Activated CD4-positive, alpha-beta memory T cell treated with anti-CD3 and anti-CD28 coated beads for 36 hours (primary cell): ENCODE measurements at regions of chr6 and their contacts with region 1.

Region 1: GRCh38 chr6:27672113-27672799 is 199.4 kb upstream of the ZNF184 start:
- DNase-seq: peak; percentile 60
- H3K4me3 Mint-ChIP-seq: peak overlapping the region; percentile 42
- H3K27ac Mint-ChIP-seq: no peak overlapping the region
- H3K4me1 Mint-ChIP-seq: peaks cover 30% of the 10 kb centered on the region
- H3K27me3 Mint-ChIP-seq: peaks cover 74% of the 10 kb centered on the region

Region 2: GRCh38 chr6:27237089-27237803 is 435.0 kb before region 1 on chr6:
- CTCF ChIA-PET with region 1: no interaction called
- POLR2A ChIA-PET with region 1: no interaction called
- intact Hi-C with region 1: loop called (anchors 5 kb)
- DNase-seq: peak; percentile 70
- H3K4me3 Mint-ChIP-seq: peak overlapping the region; percentile 44
- H3K27ac Mint-ChIP-seq: no peak overlapping the region
- H3K4me1 Mint-ChIP-seq: peaks cover 16% of the 10 kb centered on the region
- H3K27me3 Mint-ChIP-seq: peaks cover 61% of the 10 kb centered on the region

Region 3: DNA sequence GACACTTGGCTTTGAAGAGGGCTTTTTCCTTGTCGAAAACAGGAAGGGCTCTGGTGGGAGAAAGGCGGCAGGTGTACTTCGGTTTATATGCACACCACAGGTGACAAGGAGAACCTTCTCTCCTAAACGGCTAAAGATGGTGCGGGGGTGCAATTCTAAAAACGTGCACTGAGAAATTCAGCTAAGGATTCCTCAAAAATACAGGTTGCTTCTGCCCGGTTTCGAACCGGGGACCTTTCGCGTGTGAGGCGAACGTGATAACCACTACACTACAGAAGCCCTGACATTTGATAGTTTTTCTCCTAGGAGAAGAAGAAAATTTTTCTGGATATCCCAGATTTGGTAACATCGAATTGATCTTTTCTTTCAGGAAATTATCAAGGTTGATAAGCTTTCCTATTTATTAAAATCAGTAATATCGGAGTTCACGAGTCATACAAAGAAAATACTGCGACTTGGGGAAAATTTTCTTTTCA is 392.2 kb before region 1 on chr6:
- CTCF ChIA-PET with region 1: no interaction called
- POLR2A ChIA-PET with region 1: no interaction called
- intact Hi-C with region 1: loop called (anchors 5 kb)
- DNase-seq: peak; percentile 30
- H3K4me3 Mint-ChIP-seq: peak overlapping the region; percentile 45
- H3K27ac Mint-ChIP-seq: no peak overlapping the region
- H3K4me1 Mint-ChIP-seq: peaks cover 6% of the 10 kb centered on the region
- H3K27me3 Mint-ChIP-seq: peaks cover 67% of the 10 kb centered on the region

Region 4: GRCh38 chr6:27295301-27296081 is 376.8 kb before region 1 on chr6:
- CTCF ChIA-PET with region 1: no interaction called
- POLR2A ChIA-PET with region 1: no interaction called
- intact Hi-C with region 1: loop called (anchors 5 kb)
- DNase-seq: no peak
- H3K4me3 Mint-ChIP-seq: peak overlapping the region; percentile 1
- H3K27ac Mint-ChIP-seq: peak overlapping the region; percentile 9
- H3K4me1 Mint-ChIP-seq: peaks cover 5% of the 10 kb centered on the region
- H3K27me3 Mint-ChIP-seq: peaks cover 75% of the 10 kb centered on the region

Region 5: GRCh38 chr6:27553123-27553904 is 118.9 kb before region 1 on chr6:
- CTCF ChIA-PET with region 1: no interaction called
- POLR2A ChIA-PET with region 1: no interaction called
- intact Hi-C with region 1: loop called (anchors 5 kb)
- DNase-seq: peak; percentile 61
- H3K4me3 Mint-ChIP-seq: peak overlapping the region; percentile 7
- H3K27ac Mint-ChIP-seq: peak overlapping the region; percentile 56
- H3K4me1 Mint-ChIP-seq: peaks cover 10% of the 10 kb centered on the region
- H3K27me3 Mint-ChIP-seq: peaks cover 67% of the 10 kb centered on the region

Region 6: GRCh38 chr6:27608916-27609883 is 63.1 kb before region 1 on chr6:
- CTCF ChIA-PET with region 1: interaction called, 3 read pairs
- POLR2A ChIA-PET with region 1: no interaction called
- intact Hi-C with region 1: loop called (anchors 5 kb)
- DNase-seq: peak; percentile 16
- H3K4me3 Mint-ChIP-seq: no peak overlapping the region
- H3K27ac Mint-ChIP-seq: no peak overlapping the region
- H3K4me1 Mint-ChIP-seq: peaks cover 9% of the 10 kb centered on the region
- H3K27me3 Mint-ChIP-seq: peaks cover 36% of the 10 kb centered on the region

Region 7: GRCh38 chr6:27720607-27721580 is 48.6 kb after region 1 on chr6:
- CTCF ChIA-PET with region 1: no interaction called
- POLR2A ChIA-PET with region 1: no interaction called
- intact Hi-C with region 1: no loop called
- DNase-seq: peak; percentile 33
- H3K4me3 Mint-ChIP-seq: no peak overlapping the region
- H3K27ac Mint-ChIP-seq: no peak overlapping the region
- H3K4me1 Mint-ChIP-seq: peaks cover 17% of the 10 kb centered on the region
- H3K27me3 Mint-ChIP-seq: peaks cover 31% of the 10 kb centered on the region